Dorsolateral prefrontal cortex (tissue), 120 donors: ENCODE measurements at regions of chr6 and their contacts with region 1.

Region 1: DNA sequence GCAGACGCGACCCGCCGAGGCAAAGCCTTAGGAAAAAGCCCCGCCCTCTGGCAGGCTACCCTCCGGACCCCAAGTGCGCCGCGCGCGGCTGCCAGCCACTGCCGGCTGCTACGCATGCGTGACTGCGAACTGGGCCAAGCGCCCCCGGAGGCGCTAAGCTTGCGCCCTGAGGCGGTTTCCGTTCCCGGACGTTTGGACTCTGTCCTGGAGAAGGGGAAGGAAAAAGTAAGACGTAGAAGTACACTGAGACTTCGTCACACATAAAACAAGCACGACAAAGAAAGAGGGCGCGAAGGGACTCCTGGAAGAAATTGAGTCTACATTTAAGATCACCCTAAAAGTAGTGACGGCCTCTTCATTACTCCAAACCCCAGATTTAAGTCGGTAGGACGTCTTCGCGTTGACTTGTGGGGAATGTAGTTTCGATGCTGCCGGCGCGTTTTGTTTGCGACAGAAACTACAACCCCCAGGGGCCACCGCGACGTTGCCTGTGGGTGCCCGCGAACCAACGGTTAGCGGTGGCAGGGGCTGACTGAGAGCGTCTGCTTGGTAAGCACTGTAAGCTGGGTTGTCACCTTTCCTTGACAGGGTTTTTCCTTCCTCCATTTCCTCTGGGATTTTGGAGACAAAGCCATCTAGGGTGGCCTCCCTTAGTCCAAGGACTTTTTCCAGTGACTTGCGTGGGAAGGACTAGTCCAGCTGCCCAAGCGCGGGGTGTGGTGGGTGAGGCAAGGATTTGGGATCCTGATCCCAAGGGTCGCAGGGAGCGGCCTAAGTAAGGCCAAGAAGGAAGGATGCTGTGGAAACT is at the start of gene CEP57L1:
- DNase-seq: peak; percentile 92 to 98 (median 96)
- H3K4me3 ChIP-seq: peak within 1 kb of the TSS; percentile 58 to 99 (median 86)
- H3K27ac ChIP-seq: peak within 1 kb of the TSS; percentile 89 to 100 (median 98)
- H3K27me3 ChIP-seq: no peaks in the 10 kb centered on the region
- CTCF ChIP-seq: peak in 20 of 56 donors; percentile 4 to 46 (median 18)
- total RNA-seq, gene CEP57L1: 14.7 to 38.7 (median 24.8) TPM

Region 2: DNA sequence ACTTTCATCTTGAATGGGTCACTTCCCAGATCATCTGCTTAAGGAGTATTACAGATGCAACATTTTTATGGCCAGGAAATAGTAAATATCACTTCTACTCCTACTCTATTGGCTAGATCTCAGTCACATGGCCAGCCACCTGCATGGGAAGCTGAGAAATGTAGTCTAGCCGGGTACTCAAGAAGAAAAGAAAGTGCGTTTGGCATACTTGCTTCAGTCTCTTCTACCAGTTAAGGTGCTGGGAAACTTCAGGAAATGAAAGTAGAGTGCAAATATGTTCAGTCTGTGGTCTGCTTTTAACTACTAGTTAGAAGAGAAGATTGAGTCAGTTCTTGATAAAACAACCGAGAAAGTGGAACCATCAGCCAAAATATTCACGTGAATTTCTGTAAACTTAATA is 1765.1 kb before region 1 on chr6:
- intact Hi-C with region 1: no loop called
- DNase-seq: no peak
- H3K4me3 ChIP-seq: no peak overlapping the region
- H3K27ac ChIP-seq: no peak overlapping the region
- H3K27me3 ChIP-seq: no peaks in the 10 kb centered on the region
- CTCF ChIP-seq: no peak

Region 3: GRCh38 chr6:108501559-108501958 is 593.7 kb before region 1 on chr6:
- intact Hi-C with region 1: no loop called
- DNase-seq: no peak
- H3K4me3 ChIP-seq: no peak overlapping the region
- H3K27ac ChIP-seq: no peak overlapping the region
- H3K27me3 ChIP-seq: no peaks in the 10 kb centered on the region
- CTCF ChIP-seq: no peak

Region 4: GRCh38 chr6:108848116-108848868 is 246.9 kb before region 1 on chr6 and contains the start of gene ARMC2:
- intact Hi-C with region 1: loop called (anchors 1 to 10 kb)
- DNase-seq: peak; percentile 82 to 97 (median 88)
- H3K4me3 ChIP-seq: peak within 1 kb of the TSS; percentile 66 to 100 (median 87)
- H3K27ac ChIP-seq: peak within 1 kb of the TSS; percentile 13 to 93 (median 82)
- H3K27me3 ChIP-seq: no peaks in the 10 kb centered on the region
- CTCF ChIP-seq: peak in 19 of 56 donors; percentile 4 to 55 (median 29)
- total RNA-seq, gene ARMC2: 21.4 to 65.7 (median 42.0) TPM

Region 5: DNA sequence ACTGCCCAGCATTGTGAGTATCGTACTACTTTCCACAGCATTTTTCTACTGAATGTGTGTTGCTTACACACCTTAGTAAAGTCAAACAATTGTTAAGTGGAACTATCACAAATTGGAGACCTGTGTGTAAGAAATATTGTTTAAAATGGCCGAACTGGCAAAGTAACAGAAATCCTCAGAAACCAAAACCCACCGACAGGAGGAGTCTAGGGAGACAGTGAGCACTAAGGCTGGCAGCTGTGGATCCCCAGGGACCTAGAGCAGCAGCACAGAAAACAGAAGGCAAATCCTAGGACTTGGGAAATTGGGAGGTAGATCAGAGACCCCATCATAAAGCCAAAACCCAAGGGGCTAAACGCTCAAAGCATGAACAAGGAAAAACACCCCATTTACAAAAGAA is 70.4 kb before region 1 on chr6:
- intact Hi-C with region 1: no loop called
- DNase-seq: no peak
- H3K4me3 ChIP-seq: no peak overlapping the region
- H3K27ac ChIP-seq: peak overlapping the region in 5 of 59 donors; percentile 1 to 40 (median 36)
- H3K27me3 ChIP-seq: no peaks in the 10 kb centered on the region
- CTCF ChIP-seq: peak in 9 of 56 donors; percentile 8 to 48 (median 13)

Region 6: GRCh38 chr6:109165392-109165974 is 70.3 kb after region 1 on chr6:
- intact Hi-C with region 1: no loop called
- DNase-seq: no peak
- H3K4me3 ChIP-seq: no peak overlapping the region
- H3K27ac ChIP-seq: no peak overlapping the region
- H3K27me3 ChIP-seq: no peaks in the 10 kb centered on the region
- CTCF ChIP-seq: no peak